ENCODE measurements at regions of chr6 and their contacts with region 1.

Region 1: GRCh38 chr6:149513915-149514314 is 29.1 kb upstream of the ZC3H12D start:
- DNase-seq: no peak
- ATAC-seq: no peak
- H3K4me3 Mint-ChIP-seq: no peak overlapping the region
- H3K27ac Mint-ChIP-seq: no peak overlapping the region
- H3K4me1 Mint-ChIP-seq: peaks cover 51% of the 10 kb centered on the region
- H3K27me3 Mint-ChIP-seq: no peaks in the 10 kb centered on the region
- CTCF ChIP-seq: no peak

Region 2: DNA sequence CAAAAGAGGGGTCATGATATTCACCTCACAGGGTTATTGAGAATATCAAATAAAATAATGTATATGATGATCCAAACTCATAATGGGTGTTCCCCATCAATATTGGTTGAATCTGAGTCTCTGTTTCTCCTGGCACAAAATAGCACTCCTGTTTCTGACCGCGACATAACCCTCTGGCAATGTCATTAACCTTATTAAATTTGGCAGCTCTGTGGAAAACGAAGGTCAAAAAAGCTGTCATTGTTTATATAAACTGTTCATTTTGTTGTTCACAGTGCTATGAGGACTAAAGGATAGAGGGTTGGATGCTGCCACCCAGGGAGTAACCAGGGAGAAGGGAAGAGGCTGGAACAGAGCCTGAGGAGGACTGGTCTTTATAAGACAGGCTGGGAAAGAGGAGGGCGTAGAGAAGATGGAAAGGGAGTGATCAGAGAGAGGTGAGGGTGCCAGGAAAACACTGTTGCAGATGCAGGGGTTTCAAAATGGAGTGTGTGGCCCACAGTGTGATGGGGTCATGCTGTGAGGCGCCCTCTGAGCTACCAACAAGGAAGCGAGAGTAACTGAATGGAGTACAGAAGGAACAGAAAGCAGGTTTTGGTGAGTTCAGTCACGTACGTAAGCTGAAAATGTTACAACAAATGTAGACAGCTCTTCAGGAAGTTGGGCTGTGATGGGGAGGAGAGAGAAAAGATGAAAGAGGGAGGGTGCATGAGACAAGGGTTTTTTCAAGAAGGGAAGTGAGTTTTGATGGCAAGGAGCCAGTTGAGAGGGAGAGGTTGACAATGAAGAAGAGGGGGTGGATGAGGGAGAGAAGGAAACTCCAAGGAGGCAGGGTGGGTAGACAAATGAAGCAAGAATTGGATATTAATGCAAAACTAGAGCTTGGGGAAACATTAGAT is 448.0 kb before region 1 on chr6:
- CTCF ChIA-PET with region 1: interaction called, 11 read pairs
- POLR2A ChIA-PET with region 1: no interaction called
- intact Hi-C with region 1: no loop called
- DNase-seq: peak; percentile 69
- ATAC-seq: peak; percentile 97
- H3K4me3 Mint-ChIP-seq: peak overlapping the region; percentile 3
- H3K27ac Mint-ChIP-seq: peak overlapping the region; percentile 85
- H3K4me1 Mint-ChIP-seq: peaks cover 32% of the 10 kb centered on the region
- H3K27me3 Mint-ChIP-seq: no peaks in the 10 kb centered on the region
- CTCF ChIP-seq: no peak

Region 3: DNA sequence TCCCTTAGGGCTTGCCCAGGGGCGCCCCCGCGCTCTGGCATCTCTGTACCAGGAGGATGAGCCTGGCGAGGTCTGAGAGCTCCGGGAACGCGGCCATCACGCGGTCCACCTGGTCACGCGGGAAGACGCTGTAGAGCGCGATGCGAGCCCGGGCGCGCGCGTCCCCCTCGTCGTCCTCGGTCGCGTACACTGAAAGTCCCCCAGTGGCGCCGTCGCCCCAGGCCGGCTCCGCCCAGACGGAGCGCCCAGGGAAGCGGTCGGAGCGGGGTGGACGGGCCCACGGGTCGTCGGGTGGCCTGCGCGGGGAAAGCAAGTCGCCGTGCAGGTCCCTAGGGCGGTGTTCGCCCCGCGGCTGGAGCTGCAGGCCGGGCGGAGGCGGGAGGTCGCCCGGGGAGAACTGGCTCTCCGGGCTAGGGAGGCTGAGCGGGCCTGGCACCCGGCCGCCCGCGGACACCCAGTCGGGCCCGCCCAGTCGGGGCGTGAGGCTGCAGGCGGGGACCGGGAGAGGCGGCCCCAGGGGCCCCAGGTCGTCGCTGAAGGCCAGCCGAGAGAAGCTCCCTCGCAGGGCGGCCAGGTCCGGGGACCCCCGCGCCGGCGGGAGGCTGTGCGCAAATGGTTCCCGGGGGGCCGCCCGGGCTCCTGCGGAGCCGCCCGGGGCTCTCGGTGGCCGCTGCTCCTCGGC is 63.1 kb before region 1 on chr6:
- CTCF ChIA-PET with region 1: interaction called, 43 read pairs
- POLR2A ChIA-PET with region 1: no interaction called
- intact Hi-C with region 1: no loop called
- DNase-seq: peak; percentile 16
- ATAC-seq: peak; percentile 28
- H3K4me3 Mint-ChIP-seq: peak overlapping the region; percentile 36
- H3K27ac Mint-ChIP-seq: no peak overlapping the region
- H3K4me1 Mint-ChIP-seq: no peaks in the 10 kb centered on the region
- H3K27me3 Mint-ChIP-seq: no peaks in the 10 kb centered on the region
- CTCF ChIP-seq: no peak

Region 4: DNA sequence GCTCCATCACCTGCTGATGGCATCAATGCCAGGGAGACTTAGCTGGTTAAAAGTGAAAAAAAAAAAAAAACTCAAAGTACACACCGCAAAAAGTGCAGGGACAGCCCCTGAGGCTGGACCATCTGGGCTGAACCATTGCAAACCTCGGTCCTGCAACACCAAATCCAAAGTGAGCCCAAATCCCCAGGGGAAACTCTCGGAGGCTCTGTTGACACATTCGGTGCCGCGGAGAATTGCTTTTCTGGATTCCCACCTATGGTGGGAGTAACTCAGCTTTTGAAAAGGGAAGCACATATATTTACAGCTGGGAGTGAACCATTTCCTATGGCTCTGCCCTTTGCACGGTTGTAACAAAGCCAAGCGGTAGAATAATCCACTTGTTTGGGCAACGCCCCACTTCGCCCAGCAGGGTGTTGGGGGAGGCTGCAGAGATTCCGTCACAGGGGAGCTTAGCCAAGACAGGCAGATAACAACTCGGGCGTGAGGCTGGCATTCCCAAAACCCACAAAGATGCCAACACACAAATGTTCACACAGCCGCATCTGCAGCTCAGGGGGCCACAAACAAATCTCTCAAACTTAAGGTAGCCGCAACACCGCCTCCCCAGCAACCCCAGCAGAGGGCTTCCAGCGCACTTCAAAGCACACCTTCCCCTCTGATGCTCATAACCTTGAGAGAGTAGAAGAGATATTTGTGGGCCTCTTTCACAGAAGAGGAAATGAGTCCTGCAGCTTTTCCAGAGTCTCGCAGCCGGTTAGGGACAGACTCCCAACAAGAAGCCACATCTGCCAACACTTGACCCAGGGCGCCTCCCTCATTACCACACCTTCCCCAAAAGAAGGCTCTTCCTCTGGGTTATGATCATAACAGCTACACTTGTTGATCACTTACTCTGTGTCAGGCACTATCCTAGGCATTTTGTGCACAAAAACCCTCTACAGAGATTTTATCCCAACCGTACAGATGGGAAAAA is 40.5 kb before region 1 on chr6:
- CTCF ChIA-PET with region 1: interaction called, 21 read pairs
- POLR2A ChIA-PET with region 1: interaction called, 8 read pairs
- intact Hi-C with region 1: no loop called
- DNase-seq: no peak
- ATAC-seq: no peak
- H3K4me3 Mint-ChIP-seq: no peak overlapping the region
- H3K27ac Mint-ChIP-seq: no peak overlapping the region
- H3K4me1 Mint-ChIP-seq: peaks cover 47% of the 10 kb centered on the region
- H3K27me3 Mint-ChIP-seq: no peaks in the 10 kb centered on the region
- CTCF ChIP-seq: no peak

Region 5: DNA sequence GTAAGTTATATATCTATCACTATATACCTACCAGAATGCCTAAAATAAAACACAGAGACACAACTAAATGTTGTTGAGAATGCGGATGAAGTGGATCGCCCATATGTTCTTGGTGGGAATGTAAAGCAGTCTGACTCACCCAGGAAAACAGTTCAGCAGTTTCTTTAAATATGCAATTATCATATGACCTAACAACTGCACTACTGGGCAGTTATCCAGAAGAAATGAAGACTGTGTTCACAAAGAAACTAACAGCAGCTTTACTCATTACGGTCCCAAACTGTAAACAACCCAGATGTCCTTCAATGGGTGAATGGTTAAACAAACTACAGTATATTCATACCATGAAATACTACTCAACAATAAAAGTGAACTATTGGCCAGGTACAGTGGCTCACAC is 14.8 kb before region 1 on chr6:
- CTCF ChIA-PET with region 1: interaction called, 41 read pairs
- POLR2A ChIA-PET with region 1: interaction called, 9 read pairs
- intact Hi-C with region 1: no loop called
- DNase-seq: no peak
- ATAC-seq: no peak
- H3K4me3 Mint-ChIP-seq: no peak overlapping the region
- H3K27ac Mint-ChIP-seq: peak overlapping the region; percentile 82
- H3K4me1 Mint-ChIP-seq: peaks cover 76% of the 10 kb centered on the region
- H3K27me3 Mint-ChIP-seq: no peaks in the 10 kb centered on the region
- CTCF ChIP-seq: no peak

Region 6: GRCh38 chr6:149614337-149614736 is 100.4 kb after region 1 on chr6:
- CTCF ChIA-PET with region 1: no interaction called
- POLR2A ChIA-PET with region 1: no interaction called
- intact Hi-C with region 1: no loop called
- DNase-seq: no peak
- ATAC-seq: no peak
- H3K4me3 Mint-ChIP-seq: no peak overlapping the region
- H3K27ac Mint-ChIP-seq: no peak overlapping the region
- H3K4me1 Mint-ChIP-seq: peaks cover 7% of the 10 kb centered on the region
- H3K27me3 Mint-ChIP-seq: no peaks in the 10 kb centered on the region
- CTCF ChIP-seq: no peak

Region 7: DNA sequence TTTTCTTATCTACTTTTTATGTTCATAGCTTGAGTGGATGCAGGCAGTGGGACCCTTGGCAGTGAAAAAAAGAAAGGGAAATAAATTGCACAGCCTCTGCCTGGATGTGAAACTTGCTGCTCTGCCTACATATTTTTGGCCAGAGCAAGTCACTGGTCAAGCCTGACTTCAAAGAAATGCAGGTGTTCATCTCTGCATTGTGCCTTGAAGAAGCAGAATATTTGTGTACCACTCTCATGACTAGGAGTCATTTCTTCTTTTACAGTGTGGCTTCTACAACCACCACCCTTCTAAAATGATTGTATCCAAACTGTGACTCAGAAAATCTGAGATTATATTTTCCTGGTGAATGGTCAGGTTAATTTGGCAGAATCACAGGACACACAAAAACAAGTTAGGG is 137.1 kb after region 1 on chr6:
- CTCF ChIA-PET with region 1: no interaction called
- POLR2A ChIA-PET with region 1: no interaction called
- intact Hi-C with region 1: no loop called
- DNase-seq: no peak
- ATAC-seq: no peak
- H3K4me3 Mint-ChIP-seq: no peak overlapping the region
- H3K27ac Mint-ChIP-seq: no peak overlapping the region
- H3K4me1 Mint-ChIP-seq: peaks cover 12% of the 10 kb centered on the region
- H3K27me3 Mint-ChIP-seq: no peaks in the 10 kb centered on the region
- CTCF ChIP-seq: no peak

Region 8: DNA sequence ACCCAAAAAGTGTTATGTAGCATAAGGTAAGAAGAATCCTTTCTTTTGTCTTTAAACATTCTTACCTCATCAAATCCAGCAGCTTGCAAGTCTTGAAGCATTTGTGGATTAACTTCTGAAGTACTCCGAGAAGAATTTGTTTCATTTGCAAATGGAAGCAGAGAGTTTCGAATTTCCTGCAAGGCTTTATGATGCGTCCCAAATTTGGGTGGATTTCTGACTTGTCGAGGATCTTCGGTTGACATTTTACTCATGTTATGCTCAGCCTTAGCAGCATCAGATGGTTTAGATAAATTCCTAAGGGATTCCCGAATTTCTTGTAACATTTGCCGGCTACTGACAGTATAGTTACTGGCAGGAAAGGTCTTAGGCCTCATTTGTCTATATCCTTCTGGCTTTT is 187.8 kb after region 1 on chr6:
- CTCF ChIA-PET with region 1: no interaction called
- POLR2A ChIA-PET with region 1: no interaction called
- intact Hi-C with region 1: no loop called
- DNase-seq: no peak
- ATAC-seq: no peak
- H3K4me3 Mint-ChIP-seq: no peak overlapping the region
- H3K27ac Mint-ChIP-seq: no peak overlapping the region
- H3K4me1 Mint-ChIP-seq: peaks cover 41% of the 10 kb centered on the region
- H3K27me3 Mint-ChIP-seq: no peaks in the 10 kb centered on the region
- CTCF ChIP-seq: no peak

Measured in activated CD8-positive, alpha-beta T cell treated with anti-CD3 and anti-CD28 coated beads for 36 hours (primary cell).